CD8-positive, alpha-beta T cell (primary cell): ENCODE measurements at regions of chr6 and their contacts with region 1.

Region 1: GRCh38 chr6:127818149-127818548 is 82.7 kb downstream of the THEMIS start:
- DNase-seq: peak in 1 of 9 experiments; percentile 48
- ATAC-seq: peak; percentile 16
- H3K4me3 ChIP-seq: no peak overlapping the region
- H3K4me3 Mint-ChIP-seq: peak overlapping the region; percentile 50
- H3K27ac ChIP-seq: peak overlapping the region; percentile 6 to 12
- H3K27ac Mint-ChIP-seq: peak overlapping the region; percentile 82
- H3K4me1 ChIP-seq: peaks cover 77% of the 10 kb centered on the region
- H3K4me1 Mint-ChIP-seq: peaks cover 85% of the 10 kb centered on the region
- H3K27me3 ChIP-seq: no peaks in the 10 kb centered on the region
- H3K27me3 Mint-ChIP-seq: no peaks in the 10 kb centered on the region
- CTCF ChIP-seq: no peak

Region 2: GRCh38 chr6:127833336-127833735 is 15.2 kb after region 1 on chr6:
- CTCF ChIA-PET with region 1: no interaction called
- POLR2A ChIA-PET with region 1: no interaction called
- intact Hi-C with region 1: loop called in 1 of 2 experiments (anchors 2 kb)
- DNase-seq: no peak
- ATAC-seq: no peak
- H3K4me3 ChIP-seq: no peak overlapping the region
- H3K4me3 Mint-ChIP-seq: no peak overlapping the region
- H3K27ac ChIP-seq: no peak overlapping the region
- H3K27ac Mint-ChIP-seq: peak overlapping the region; percentile 16
- H3K4me1 ChIP-seq: peaks cover 14% of the 10 kb centered on the region
- H3K4me1 Mint-ChIP-seq: peaks cover 66% of the 10 kb centered on the region
- H3K27me3 ChIP-seq: no peaks in the 10 kb centered on the region
- H3K27me3 Mint-ChIP-seq: no peaks in the 10 kb centered on the region
- CTCF ChIP-seq: no peak

Region 3: GRCh38 chr6:127869772-127870404 is 51.7 kb after region 1 on chr6:
- CTCF ChIA-PET with region 1: no interaction called
- POLR2A ChIA-PET with region 1: no interaction called
- intact Hi-C with region 1: no loop called
- DNase-seq: no peak
- ATAC-seq: peak; percentile 47
- H3K4me3 ChIP-seq: no peak overlapping the region
- H3K4me3 Mint-ChIP-seq: peak overlapping the region; percentile 60
- H3K27ac ChIP-seq: no peak overlapping the region
- H3K27ac Mint-ChIP-seq: peak overlapping the region; percentile 82
- H3K4me1 ChIP-seq: peaks cover 45% of the 10 kb centered on the region
- H3K4me1 Mint-ChIP-seq: peaks cover 67% of the 10 kb centered on the region
- H3K27me3 ChIP-seq: no peaks in the 10 kb centered on the region
- H3K27me3 Mint-ChIP-seq: no peaks in the 10 kb centered on the region
- CTCF ChIP-seq: no peak